ENCODE measurements at regions of chr9 and their contacts with region 1.

Region 1: GRCh38 chr9:19441730-19442129 is 32.9 kb downstream of the ACER2 start:
- DNase-seq: no peak
- H3K4me3 ChIP-seq: no peak overlapping the region
- H3K27ac ChIP-seq: no peak overlapping the region
- H3K4me1 ChIP-seq: peaks cover 12 to 20% (median 18%) of the 10 kb centered on the region in 4 experiments
- H3K27me3 ChIP-seq: no peaks in the 10 kb centered on the region
- CTCF ChIP-seq: no peak
- EP300 ChIP-seq: no peak
- POLR2A ChIP-seq: no peak
- RAD21 ChIP-seq: no peak

Region 2: GRCh38 chr9:19371942-19372341 is 69.8 kb before region 1 on chr9:
- CTCF ChIA-PET with region 1: interaction called, 3 read pairs
- POLR2A ChIA-PET with region 1: interaction called, 33 read pairs
- DNase-seq: no peak
- H3K4me3 ChIP-seq: no peak overlapping the region
- H3K27ac ChIP-seq: no peak overlapping the region
- H3K4me1 ChIP-seq: no peaks in the 10 kb centered on the region
- H3K27me3 ChIP-seq: no peaks in the 10 kb centered on the region
- CTCF ChIP-seq: peak in 1 of 3 experiments; percentile 14; a peak in 2 of 4 replicates
- EP300 ChIP-seq: no peak
- POLR2A ChIP-seq: no peak
- RAD21 ChIP-seq: no peak; a peak in 1 of 4 replicates

Region 3: GRCh38 chr9:19456996-19457692 is 15.4 kb after region 1 on chr9:
- CTCF ChIA-PET with region 1: interaction called, 3 read pairs
- POLR2A ChIA-PET with region 1: interaction called, 16 read pairs
- DNase-seq: peak; percentile 65 to 87
- H3K4me3 ChIP-seq: no peak overlapping the region; a peak in 1 of 8 replicates
- H3K27ac ChIP-seq: no peak overlapping the region
- H3K4me1 ChIP-seq: peaks cover 0 to 7% (median 5%) of the 10 kb centered on the region in 4 experiments; a peak in 2 of 7 replicates
- H3K27me3 ChIP-seq: no peaks in the 10 kb centered on the region
- CTCF ChIP-seq: peak; percentile 74 to 98 (median 85)
- EP300 ChIP-seq: no peak; a peak in 1 of 3 replicates
- POLR2A ChIP-seq: no peak
- RAD21 ChIP-seq: peak; percentile 99 to 100